Activated CD4-positive, alpha-beta memory T cell treated with anti-CD3 and anti-CD28 coated beads, Interleukin-2, amount 10 ng/mL, durations not matched to agents 7 days and 5 days (primary cell): ENCODE measurements at regions of chr12 and their contacts with region 1.

Region 1: GRCh38 chr12:68158432-68158831 is 1.1 kb downstream of the IFNG start:
- DNase-seq: peak; percentile 26
- H3K4me3 Mint-ChIP-seq: peak overlapping the region; percentile 75
- H3K27ac Mint-ChIP-seq: peak overlapping the region; percentile 31
- H3K4me1 Mint-ChIP-seq: peaks cover 53% of the 10 kb centered on the region
- H3K27me3 Mint-ChIP-seq: no peaks in the 10 kb centered on the region

Region 2: DNA sequence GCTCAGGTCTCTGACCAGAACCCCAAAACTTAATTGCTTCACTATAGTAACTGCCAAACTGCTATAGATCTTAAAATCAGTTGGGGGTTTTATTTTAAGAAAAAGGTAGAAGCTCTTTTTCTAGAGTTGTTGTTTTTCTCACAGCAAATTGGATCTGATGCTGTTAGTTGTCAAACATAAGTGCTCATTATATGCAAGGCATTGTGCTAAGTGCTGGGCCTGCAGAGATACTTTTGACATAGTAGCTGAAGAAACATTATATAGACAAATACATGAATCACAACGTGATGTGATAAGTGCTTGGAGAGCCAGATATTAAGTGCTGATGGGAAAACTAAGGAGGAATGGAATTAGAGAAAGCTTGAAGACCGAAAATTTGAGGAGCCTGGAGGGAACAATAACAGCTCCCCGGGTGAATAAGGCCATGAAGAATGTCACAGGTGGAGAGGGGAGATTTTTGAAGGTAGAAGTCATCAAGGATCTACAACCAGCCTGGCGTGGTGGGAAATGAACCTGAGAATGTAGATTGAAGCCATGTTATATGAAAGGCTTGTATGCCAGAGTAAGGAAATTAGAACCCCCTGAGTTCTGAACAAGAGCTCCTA is 383.3 kb before region 1 on chr12:
- CTCF ChIA-PET with region 1: no interaction called
- POLR2A ChIA-PET with region 1: no interaction called
- DNase-seq: no peak
- H3K4me3 Mint-ChIP-seq: no peak overlapping the region
- H3K27ac Mint-ChIP-seq: no peak overlapping the region
- H3K4me1 Mint-ChIP-seq: no peaks in the 10 kb centered on the region
- H3K27me3 Mint-ChIP-seq: no peaks in the 10 kb centered on the region

Region 3: DNA sequence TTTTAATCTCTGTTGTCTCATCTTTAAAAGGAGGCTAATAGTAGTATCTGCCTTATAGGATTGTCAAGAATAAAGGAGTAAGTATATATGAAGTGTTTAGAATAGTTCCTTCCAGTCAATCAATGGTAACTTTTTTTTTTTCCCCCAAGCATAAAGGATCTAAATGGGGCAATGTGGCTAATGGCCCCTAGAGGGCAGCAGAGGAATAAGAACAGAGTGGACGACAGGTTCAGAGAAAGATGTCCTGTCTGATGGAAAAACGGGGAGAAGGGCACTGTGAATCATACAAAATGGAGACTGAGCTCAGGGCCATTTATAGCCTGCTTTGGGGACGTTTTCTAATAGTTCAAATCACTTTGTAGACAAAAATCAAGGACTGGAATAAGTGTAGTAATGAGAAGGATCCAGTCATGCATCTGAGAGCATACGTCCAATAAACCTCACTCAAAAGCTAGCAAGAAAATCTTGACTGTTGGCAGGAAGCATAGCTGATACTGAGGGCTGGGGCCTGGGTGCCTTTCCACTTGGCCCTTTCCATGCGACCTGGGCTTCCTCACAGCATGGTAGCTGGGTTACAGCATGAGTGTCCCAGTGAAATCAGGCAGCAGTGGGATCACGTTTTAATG is 117.9 kb before region 1 on chr12:
- CTCF ChIA-PET with region 1: interaction called, 163 read pairs
- POLR2A ChIA-PET with region 1: interaction called, 18 read pairs
- DNase-seq: peak; percentile 70
- H3K4me3 Mint-ChIP-seq: no peak overlapping the region
- H3K27ac Mint-ChIP-seq: peak overlapping the region; percentile 11
- H3K4me1 Mint-ChIP-seq: peaks cover 36% of the 10 kb centered on the region
- H3K27me3 Mint-ChIP-seq: no peaks in the 10 kb centered on the region

Region 4: GRCh38 chr12:68113644-68114043 is 44.8 kb before region 1 on chr12:
- CTCF ChIA-PET with region 1: interaction called, 126 read pairs
- POLR2A ChIA-PET with region 1: interaction called, 89 read pairs
- DNase-seq: peak; percentile 64
- H3K4me3 Mint-ChIP-seq: no peak overlapping the region
- H3K27ac Mint-ChIP-seq: no peak overlapping the region
- H3K4me1 Mint-ChIP-seq: peaks cover 39% of the 10 kb centered on the region
- H3K27me3 Mint-ChIP-seq: no peaks in the 10 kb centered on the region

Region 5: DNA sequence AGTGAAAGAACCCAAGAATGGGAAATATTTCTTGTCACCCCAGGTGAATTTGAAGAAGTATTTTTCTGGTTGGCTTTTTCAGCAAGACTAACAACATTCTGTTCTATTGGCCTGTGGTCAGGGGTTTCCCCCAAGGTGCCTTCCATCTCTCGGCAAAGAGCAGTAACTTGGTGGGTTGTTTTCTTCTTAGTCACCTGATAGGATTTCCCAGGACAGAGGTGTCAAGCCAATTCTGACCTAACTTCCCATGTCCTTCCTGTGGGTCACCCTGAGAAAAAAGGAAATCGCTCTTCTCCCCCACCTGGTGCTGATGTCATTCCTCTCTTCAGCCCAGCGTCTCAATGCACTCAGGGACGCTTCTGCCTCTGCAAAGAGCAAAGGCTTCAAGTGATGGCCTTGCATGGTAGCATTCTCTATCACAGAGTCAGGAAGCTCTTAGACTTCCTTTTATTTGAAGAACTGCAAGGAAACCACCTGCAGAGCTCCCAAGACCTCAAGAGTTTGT is 17.2 kb after region 1 on chr12:
- CTCF ChIA-PET with region 1: interaction called, 16 read pairs
- POLR2A ChIA-PET with region 1: interaction called, 12 read pairs
- DNase-seq: peak; percentile 67
- H3K4me3 Mint-ChIP-seq: peak overlapping the region; percentile 19
- H3K27ac Mint-ChIP-seq: peak overlapping the region; percentile 42
- H3K4me1 Mint-ChIP-seq: peaks cover 54% of the 10 kb centered on the region
- H3K27me3 Mint-ChIP-seq: no peaks in the 10 kb centered on the region

Region 6: DNA sequence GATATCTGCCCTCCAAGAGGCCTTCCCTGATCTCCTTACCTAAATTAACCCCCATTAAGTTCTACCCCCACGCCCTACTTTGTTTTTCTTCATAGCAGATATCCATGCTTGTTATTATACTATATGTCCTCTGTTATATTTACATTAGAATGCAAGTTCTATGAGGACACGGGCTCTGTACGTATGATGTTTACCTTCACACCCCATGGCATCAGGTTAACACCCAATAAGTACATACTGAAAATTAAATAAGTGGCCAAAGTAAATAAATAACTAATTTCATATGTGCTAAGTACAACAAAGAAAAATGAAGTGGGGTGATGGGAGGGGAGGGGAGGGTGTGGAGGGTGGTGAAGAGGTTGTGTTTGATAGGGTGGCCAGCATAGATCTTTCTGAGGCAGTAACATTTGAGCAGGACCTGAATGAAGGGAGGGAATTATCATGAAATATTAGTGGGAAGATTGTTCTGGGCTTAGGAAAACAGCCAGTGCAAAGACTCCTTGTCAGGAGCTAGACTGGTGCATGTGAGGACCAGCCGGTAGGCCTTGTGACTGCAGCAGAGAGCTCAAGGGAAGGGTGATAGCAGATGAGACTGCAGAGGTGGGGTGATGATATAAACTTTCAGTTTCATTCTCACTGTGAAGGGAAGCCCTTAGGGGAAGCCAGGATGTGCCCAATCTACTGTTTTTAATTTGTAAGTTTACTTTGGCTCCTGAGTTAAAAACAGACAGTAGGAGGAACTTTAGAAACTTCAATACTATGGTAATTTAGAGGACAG is 82.4 kb after region 1 on chr12:
- CTCF ChIA-PET with region 1: no interaction called
- POLR2A ChIA-PET with region 1: no interaction called
- DNase-seq: peak; percentile 67
- H3K4me3 Mint-ChIP-seq: peak overlapping the region; percentile 50
- H3K27ac Mint-ChIP-seq: peak overlapping the region; percentile 88
- H3K4me1 Mint-ChIP-seq: peaks cover 63% of the 10 kb centered on the region
- H3K27me3 Mint-ChIP-seq: no peaks in the 10 kb centered on the region